ENCODE measurements at regions of chr7 and their contacts with region 1.

Region 1: DNA sequence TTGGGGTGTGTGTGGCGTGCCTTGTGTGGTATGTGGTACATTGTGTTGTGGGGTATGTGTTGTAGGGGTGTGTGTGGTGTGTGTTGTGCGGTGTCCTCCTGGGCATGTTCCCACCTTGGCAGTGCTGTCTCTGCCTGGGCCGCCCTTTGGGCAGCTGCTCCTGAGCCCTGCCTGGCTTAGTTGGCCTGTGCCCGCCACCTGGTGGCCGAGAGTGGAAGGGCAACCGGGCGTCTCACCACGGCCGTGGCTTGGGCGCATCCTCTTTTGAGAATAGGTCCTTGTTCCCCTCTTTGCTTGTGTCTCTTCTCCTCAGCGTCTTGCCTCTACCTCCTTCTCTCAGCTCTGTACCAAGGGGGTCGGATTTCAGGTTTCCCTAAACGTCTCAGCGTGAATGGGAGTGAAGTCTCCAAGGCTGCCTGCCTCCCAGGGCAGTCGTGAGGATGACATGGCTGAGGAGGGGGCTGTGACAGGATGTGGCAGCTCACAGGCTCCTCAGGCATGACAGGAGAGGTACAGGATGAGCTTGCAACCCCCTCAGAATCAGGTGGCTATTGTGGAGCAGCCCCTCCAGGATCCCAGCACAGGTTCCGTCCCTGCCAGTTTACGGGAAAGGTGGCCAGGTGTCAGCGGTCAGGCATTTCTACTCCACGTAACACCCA is 98.4 kb upstream of the PODXL start:
- DNase-seq: peak; percentile 91
- ATAC-seq: peak; percentile 96
- H3K4me3 ChIP-seq: no peak overlapping the region
- H3K27ac ChIP-seq: no peak overlapping the region
- H3K4me1 ChIP-seq: no peaks in the 10 kb centered on the region
- H3K27me3 ChIP-seq: no peaks in the 10 kb centered on the region
- CTCF ChIP-seq: peak; percentile 91

Region 2: DNA sequence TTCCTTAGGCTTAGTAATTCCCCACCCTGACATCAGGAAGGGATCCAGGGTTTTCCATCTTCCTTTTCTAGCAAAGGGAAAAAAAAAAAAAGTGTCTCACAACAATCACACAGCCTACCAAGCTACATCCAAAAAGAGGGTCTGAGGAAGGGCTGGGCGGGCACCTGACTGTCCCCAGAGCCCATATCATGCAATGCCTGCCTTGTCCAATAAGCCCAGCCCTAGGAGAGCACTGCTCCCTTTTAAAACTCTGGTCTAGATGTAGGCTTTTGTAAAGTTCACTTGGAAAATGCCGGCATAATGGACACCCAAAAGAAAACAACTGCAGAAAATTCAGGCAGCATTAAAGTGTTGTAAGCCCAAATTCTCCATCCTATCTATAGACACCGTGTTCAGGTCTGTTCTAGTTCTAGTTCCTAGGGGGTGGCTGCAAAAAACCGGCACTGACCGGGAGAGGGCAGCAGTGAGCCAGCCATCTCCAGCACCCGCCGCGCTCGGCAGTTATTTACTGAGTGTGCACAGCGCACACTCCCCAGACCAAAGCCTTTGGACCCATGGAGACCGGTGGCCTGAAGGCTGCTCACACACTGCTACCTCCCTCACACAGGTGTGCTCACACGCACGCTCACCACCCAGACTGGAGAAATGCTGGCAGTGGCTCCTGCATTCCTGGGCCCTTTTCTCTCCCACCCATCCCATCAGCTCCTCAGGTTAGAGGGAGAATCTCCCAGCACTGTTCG is 147.0 kb before region 1 on chr7:
- intact Hi-C with region 1: loop called (anchors 5 kb)
- DNase-seq: peak; percentile 89
- ATAC-seq: peak; percentile 89
- H3K4me3 ChIP-seq: no peak overlapping the region
- H3K27ac ChIP-seq: no peak overlapping the region
- H3K4me1 ChIP-seq: peaks cover 22% of the 10 kb centered on the region
- H3K27me3 ChIP-seq: no peaks in the 10 kb centered on the region
- CTCF ChIP-seq: peak; percentile 91

Region 3: DNA sequence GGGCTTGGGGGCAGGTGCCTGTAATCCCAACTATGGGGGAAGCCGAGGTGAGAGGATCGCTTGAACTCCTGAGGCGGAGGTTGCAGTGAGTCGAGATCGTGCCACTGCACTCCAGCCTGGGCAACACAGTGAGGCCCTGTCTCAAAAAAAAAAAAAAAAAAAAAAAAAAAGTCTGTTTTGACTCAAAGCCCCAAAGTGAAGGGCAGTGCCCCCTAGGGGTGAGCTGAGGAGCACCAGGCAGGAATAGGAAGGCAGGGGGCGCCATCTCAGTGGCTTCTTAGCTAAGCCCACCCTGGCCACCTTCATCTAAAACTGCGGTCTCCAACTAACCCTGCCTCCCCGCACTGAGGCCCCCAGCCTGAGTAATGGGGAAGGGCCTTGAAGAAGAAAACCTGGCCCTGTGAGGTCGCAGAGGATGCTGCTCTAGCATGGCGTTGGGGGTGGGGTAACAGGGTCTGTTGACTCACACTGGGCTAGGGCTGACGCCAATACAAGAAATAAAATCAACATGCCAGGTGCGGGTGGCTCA is 108.2 kb before region 1 on chr7:
- intact Hi-C with region 1: loop called (anchors 10 kb)
- DNase-seq: no peak
- ATAC-seq: peak; percentile 9
- H3K4me3 ChIP-seq: no peak overlapping the region
- H3K27ac ChIP-seq: no peak overlapping the region
- H3K4me1 ChIP-seq: peaks cover 17% of the 10 kb centered on the region
- H3K27me3 ChIP-seq: no peaks in the 10 kb centered on the region
- CTCF ChIP-seq: peak; percentile 52

Measured in upper lobe of right lung (tissue), 1 donor.